PC-3 (cell line): ENCODE measurements at regions of chr7 and their contacts with region 1.

Region 1: GRCh38 chr7:146129296-146129695 is 12.7 kb downstream of the CNTNAP2 start:
- DNase-seq: no peak
- ATAC-seq: no peak
- H3K4me3 ChIP-seq: no peak overlapping the region
- H3K27ac ChIP-seq: no peak overlapping the region
- H3K4me1 ChIP-seq: 0 out of 2 replicates have a peak, but pooled peaks cover 3% of the 10 kb centered on the region
- H3K27me3 ChIP-seq: no peaks in the 10 kb centered on the region
- CTCF ChIP-seq: no peak

Region 2: DNA sequence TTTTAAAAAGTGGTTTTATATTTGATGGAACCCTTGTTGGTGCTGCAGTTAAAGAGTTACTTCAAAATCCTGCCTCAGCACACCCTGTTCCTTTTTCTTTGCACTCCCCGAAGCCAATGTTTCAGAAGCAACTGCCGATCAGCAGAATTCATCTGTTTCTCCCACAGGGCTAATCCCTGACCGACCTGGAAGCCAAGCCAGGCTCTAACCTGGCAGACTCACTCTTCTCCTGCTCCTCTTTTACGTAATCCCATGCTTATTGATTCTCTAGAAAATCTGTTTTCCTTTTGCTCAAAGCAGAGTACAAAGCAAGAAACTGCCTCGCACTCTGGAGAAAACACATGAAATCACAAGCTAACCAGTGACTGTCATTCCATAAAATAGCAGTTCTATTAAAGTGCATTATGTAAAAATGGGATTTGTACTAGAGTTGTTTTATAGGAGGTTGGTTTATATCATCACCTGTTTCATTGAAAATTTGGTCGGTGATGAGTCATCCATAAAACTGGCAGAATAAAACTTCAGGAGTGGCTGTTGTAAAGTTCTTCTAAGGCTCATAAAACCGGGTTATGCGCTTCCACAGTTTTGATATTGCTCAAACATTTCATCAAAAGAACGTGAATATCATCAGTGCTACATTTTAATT is 87.2 kb after region 1 on chr7:
- CTCF ChIA-PET with region 1: no interaction called
- POLR2A ChIA-PET with region 1: no interaction called
- intact Hi-C with region 1: loop called (anchors 5 kb)
- DNase-seq: peak; percentile 53
- ATAC-seq: peak; percentile 84
- H3K4me3 ChIP-seq: peak overlapping the region; percentile 48
- H3K27ac ChIP-seq: peak overlapping the region; percentile 53
- H3K4me1 ChIP-seq: peaks cover 13% of the 10 kb centered on the region; the same call in 1 of the 2 replicates
- H3K27me3 ChIP-seq: no peaks in the 10 kb centered on the region
- CTCF ChIP-seq: no peak

Region 3: DNA sequence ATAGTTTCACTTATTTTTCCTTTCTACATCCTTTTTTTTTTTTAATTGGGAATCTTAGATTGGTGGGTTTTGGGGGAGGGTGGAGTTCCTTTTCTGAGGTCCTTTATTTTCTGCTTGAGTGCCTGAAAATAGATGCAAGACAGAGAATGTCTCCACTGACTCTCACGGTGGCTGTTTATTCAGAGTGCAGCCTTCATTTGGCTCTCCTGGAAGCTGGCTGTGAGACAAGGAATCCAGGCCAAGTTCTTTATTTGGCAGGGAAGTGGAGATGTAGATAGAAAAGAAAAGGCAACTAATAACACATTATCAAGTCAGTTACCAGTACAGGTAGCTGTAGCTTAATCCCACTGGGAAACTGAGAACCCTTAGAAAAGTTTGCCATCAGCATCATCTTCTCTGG is 105.9 kb after region 1 on chr7:
- CTCF ChIA-PET with region 1: no interaction called
- POLR2A ChIA-PET with region 1: no interaction called
- intact Hi-C with region 1: no loop called
- DNase-seq: no peak
- ATAC-seq: no peak
- H3K4me3 ChIP-seq: no peak overlapping the region
- H3K27ac ChIP-seq: no peak overlapping the region
- H3K4me1 ChIP-seq: no peaks in the 10 kb centered on the region
- H3K27me3 ChIP-seq: no peaks in the 10 kb centered on the region
- CTCF ChIP-seq: no peak

Region 4: GRCh38 chr7:146366938-146367337 is 237.6 kb after region 1 on chr7:
- CTCF ChIA-PET with region 1: no interaction called
- POLR2A ChIA-PET with region 1: no interaction called
- intact Hi-C with region 1: loop called (anchors 5 kb)
- DNase-seq: peak; percentile 70
- ATAC-seq: peak; percentile 99
- H3K4me3 ChIP-seq: no peak overlapping the region
- H3K27ac ChIP-seq: peak overlapping the region; percentile 34
- H3K4me1 ChIP-seq: peaks cover 5% of the 10 kb centered on the region; the same call in 1 of the 2 replicates
- H3K27me3 ChIP-seq: no peaks in the 10 kb centered on the region
- CTCF ChIP-seq: no peak